Activated naive CD4-positive, alpha-beta T cell treated with anti-CD3 and anti-CD28 coated beads for 36 hours (primary cell): ENCODE measurements at regions of chr6 and their contacts with region 1.

Region 1: DNA sequence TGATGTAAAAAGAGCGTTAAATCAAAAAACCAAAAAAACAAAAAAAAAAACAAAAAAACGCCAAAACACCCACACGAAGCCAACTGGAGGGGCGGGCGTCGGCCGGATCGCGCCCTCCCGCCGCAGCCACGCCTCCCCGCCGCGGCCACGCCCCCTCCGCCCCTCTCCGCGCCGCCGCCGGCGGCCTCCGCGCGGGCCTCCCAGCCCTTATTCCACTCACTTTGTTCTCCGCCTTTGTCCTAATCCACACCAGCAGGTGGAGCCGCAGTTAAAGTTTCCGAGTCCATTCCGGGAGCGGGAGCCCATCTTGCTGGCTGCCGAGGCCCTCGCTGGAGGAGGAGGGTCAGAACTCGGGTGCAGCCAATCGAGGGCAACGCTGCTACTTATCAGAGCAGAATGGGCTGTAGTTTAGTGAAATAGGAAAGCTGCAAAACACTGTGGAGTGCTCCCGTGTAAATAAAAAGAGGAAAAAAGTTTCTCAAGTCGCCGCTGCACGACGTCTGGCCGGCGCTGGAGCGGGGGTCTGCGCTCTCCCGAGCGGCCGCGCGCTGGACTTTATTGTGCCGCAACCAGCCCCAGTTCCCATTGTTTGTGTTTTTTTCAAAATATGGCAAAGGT is at the start of gene ASF1A:
- DNase-seq: peak; percentile 98
- H3K4me3 Mint-ChIP-seq: peak within 1 kb of the TSS; percentile 88
- H3K27ac Mint-ChIP-seq: peak within 1 kb of the TSS; percentile 97
- H3K4me1 Mint-ChIP-seq: peaks cover 50% of the 10 kb centered on the region
- H3K27me3 Mint-ChIP-seq: no peaks in the 10 kb centered on the region
- total RNA-seq, gene ASF1A: 30.3 to 31.4 TPM

Region 2: DNA sequence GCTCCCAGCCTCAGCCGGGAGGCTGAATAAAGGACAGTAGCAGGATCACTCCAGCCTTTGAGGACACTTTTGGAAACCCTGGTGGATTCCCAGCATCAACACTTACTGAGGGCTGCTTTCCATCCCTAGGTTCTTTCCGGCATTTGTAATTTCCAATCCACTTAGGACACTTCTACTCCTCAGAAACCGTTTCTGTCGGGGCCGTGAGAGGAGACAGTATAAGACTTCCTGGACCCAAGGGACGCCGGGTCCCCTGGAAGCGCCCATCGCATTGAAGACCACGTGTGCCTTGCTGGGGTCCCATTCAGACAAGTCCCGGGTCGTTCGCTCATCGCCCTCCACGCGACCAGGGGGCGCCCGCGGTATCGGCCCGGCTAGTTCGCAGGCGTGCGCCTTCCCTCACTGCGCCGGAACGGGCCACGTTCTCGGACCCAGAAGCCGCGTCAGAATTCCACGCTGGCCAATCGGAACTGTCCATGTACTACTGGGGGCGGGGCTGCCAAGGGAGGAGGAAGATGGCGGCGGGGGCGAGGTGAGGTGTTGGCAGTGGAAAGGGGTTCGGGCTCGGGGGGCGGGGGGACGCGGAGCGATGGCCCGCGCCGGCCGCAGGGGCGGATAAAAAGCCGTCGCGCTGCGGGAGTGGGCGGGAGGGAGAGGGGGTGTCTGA is 1218.8 kb before region 1 on chr6 and contains the start of gene NUS1:
- CTCF ChIA-PET with region 1: no interaction called
- intact Hi-C with region 1: loop called (anchors 5 kb)
- DNase-seq: peak; percentile 98
- H3K4me3 Mint-ChIP-seq: peak within 1 kb of the TSS; percentile 94
- H3K27ac Mint-ChIP-seq: peak within 1 kb of the TSS; percentile 93
- H3K4me1 Mint-ChIP-seq: peaks cover 46% of the 10 kb centered on the region
- H3K27me3 Mint-ChIP-seq: no peaks in the 10 kb centered on the region
- total RNA-seq, gene NUS1: 24.0 to 24.1 TPM

Region 3: GRCh38 chr6:118565311-118565960 is 328.5 kb before region 1 on chr6:
- CTCF ChIA-PET with region 1: interaction called, 3 read pairs
- intact Hi-C with region 1: loop called (anchors 1 kb)
- DNase-seq: peak; percentile 26
- H3K4me3 Mint-ChIP-seq: no peak overlapping the region
- H3K27ac Mint-ChIP-seq: peak overlapping the region; percentile 12
- H3K4me1 Mint-ChIP-seq: peaks cover 28% of the 10 kb centered on the region
- H3K27me3 Mint-ChIP-seq: no peaks in the 10 kb centered on the region

Region 4: DNA sequence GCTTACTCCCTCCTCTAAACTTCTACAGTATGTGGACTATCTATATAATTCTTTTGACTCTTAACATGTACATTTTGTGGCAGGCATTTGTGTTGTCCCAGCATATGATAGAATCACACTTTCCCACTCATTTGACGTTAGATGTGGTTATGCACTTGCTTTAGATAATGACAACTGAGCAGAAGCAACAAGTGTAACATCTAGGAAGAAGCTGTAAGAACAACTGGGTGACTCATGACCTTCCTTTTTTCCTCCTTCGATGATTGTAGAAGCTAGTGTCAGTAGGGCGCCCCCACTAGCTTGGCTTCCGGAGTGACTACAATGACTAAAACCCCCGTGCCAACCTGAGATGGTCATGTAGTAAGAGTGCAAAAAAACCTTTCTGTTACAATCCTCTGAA is 168.0 kb before region 1 on chr6:
- CTCF ChIA-PET with region 1: interaction called, 4 read pairs
- intact Hi-C with region 1: loop called (anchors 2 kb)
- DNase-seq: peak; percentile 93
- H3K4me3 Mint-ChIP-seq: peak overlapping the region; percentile 26
- H3K27ac Mint-ChIP-seq: peak overlapping the region; percentile 91
- H3K4me1 Mint-ChIP-seq: peaks cover 55% of the 10 kb centered on the region
- H3K27me3 Mint-ChIP-seq: no peaks in the 10 kb centered on the region

Region 5: DNA sequence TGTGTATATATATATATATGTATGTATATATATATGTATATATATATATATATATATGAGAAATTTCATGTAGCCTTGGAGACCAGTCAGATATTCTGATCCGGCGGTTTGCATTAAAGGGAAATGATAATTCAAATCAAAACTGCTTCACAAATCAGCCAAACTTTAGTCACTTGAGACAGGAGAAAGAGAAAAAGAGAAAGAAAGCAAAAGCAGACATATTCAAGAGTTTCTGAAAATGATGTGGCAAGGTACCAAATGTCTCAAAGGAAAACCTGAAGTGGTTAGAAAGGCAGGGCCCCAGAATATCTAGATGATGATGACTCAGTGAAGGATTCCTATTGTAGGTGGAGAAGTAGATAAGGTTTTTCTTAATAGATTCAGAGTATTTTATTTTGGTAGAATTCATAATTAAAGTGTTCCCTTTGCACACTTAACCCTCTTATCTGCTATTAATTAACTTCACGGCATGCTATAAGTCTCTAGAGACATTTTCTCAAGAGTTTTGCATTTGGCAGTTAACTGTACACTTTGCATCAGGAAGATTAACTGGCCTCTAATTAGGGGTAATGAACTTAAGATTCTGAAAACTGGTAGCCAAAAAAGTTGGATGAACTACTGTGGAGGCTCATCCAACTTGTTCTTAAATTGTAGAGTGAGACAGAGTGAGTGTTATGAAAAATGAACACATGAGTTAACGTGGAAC is 50.1 kb before region 1 on chr6:
- CTCF ChIA-PET with region 1: interaction called, 7 read pairs
- intact Hi-C with region 1: loop called (anchors 1 kb)
- DNase-seq: peak; percentile 50
- H3K4me3 Mint-ChIP-seq: no peak overlapping the region
- H3K27ac Mint-ChIP-seq: peak overlapping the region; percentile 2
- H3K4me1 Mint-ChIP-seq: peaks cover 23% of the 10 kb centered on the region
- H3K27me3 Mint-ChIP-seq: no peaks in the 10 kb centered on the region

Region 6: DNA sequence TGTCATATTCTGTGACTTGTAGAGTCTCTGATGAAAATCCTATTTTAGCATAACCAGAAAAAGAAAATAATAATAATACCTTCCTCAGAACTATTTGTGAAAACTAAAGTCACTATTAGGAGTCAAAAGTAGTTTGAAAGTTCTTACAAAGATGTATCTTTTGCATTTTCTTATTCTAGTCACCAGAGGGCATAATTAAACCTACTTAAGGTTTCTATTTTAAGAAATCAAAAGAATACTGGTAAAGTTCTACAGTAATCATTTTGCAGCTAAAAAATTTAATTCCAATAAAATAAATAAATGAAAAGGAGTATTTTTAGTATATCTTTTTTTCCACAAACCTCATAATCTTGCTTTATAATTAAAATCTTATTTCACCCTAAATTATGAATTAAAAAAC is 69.1 kb after region 1 on chr6:
- CTCF ChIA-PET with region 1: interaction called, 5 read pairs
- intact Hi-C with region 1: loop called (anchors 2 kb)
- DNase-seq: no peak
- H3K4me3 Mint-ChIP-seq: no peak overlapping the region
- H3K27ac Mint-ChIP-seq: no peak overlapping the region
- H3K4me1 Mint-ChIP-seq: peaks cover 4% of the 10 kb centered on the region
- H3K27me3 Mint-ChIP-seq: no peaks in the 10 kb centered on the region

Region 7: DNA sequence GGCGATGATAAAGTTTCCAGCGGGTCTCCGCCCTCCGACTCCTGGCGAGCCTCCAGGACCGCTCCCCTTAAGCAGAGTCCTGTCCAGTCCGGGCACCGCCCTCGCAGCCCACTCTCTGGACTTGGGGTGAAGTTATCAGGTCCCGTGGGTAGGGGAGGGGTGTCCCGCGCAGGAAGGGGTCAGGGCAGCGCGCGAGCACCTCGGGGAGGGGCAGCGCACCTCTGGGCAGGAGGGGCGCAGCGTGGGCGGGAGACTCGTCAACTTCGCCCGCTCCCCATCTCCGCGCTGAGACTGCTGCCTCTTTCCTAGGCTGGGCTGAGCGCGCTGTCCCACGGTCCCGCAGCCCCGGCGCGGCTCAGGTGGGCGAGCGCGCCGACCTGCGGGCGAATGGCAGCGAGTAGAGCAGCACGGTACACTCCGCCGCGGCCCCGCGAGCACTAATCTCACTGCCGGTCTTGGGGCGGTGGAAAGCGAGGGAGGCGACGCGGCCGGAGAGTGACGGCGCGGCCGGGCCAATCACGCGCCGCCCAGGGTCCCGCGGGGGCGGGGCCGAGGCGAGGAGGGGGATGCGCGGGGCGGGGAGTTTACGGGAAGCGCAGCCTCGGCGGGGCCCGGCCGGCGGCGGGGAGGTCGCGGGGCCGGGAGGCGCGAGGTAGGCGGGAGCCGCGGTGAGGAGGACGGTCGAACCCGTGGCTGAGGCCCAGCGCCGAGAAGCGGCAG is 455.6 kb after region 1 on chr6 and contains the start of gene MAN1A1:
- CTCF ChIA-PET with region 1: interaction called, 3 read pairs
- intact Hi-C with region 1: loop called (anchors 1 kb)
- DNase-seq: peak; percentile 88
- H3K4me3 Mint-ChIP-seq: peak within 1 kb of the TSS; percentile 84
- H3K27ac Mint-ChIP-seq: peak within 1 kb of the TSS; percentile 96
- H3K4me1 Mint-ChIP-seq: peaks cover 37% of the 10 kb centered on the region
- H3K27me3 Mint-ChIP-seq: no peaks in the 10 kb centered on the region
- total RNA-seq, gene MAN1A1: 14.8 to 15.1 TPM